ENCODE measurements at regions of chr18 and their contacts with region 1.

Region 1: GRCh38 chr18:839224-840022 is 27.4 kb upstream of the YES1 start:
- DNase-seq: peak; percentile 52 to 65
- ATAC-seq: peak; percentile 77 to 85
- H3K4me3 ChIP-seq: no peak overlapping the region
- H3K27ac ChIP-seq: no peak overlapping the region
- H3K4me1 ChIP-seq: peaks cover 0 to 5% of the 10 kb centered on the region in 2 donors
- H3K27me3 ChIP-seq: no peaks in the 10 kb centered on the region
- CTCF ChIP-seq: peak; percentile 78 to 99 (median 89)
- POLR2A ChIP-seq: no peak

Region 2: DNA sequence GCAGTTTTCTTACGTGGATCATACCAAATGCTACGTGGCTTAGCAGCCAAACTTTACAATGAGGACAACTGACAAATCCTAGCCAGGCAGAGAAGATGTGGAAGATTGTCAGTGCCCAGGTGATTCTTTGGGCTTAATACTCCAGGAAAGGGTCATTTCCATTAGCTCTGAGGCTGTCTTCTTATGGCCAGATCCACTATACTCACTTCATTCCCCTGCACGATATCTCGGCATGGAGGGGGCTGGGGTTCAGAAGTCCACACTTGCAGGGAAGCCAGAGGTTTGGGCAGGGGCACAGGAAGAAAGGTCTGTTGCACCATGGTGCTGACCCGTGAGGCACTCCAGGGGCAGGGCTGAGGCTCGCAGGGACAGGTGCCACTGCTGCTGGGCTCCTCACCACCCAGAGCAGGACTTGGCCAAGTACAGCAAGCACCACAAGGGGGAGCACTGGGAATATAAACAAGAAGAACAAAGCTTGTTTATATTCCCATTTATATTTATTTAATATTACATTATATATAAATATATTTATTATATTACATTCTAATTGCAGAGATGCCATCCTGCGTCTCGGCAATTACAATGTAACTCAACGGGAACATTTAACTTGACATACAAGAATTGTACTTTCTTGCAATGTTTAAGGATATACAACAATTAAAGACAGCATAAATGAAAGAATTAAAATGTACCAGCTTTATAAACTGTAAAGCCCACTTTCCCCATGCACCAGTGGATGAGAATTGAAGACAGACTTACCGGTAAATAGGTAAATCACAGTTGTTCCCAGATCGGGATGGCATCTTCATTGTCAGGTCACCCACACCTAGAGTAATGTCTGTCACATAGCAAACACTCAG is 215.4 kb before region 1 on chr18:
- in situ Hi-C with region 1: loop called in 3 of 4 experiments (anchors 5 to 25 kb)
- intact Hi-C with region 1: loop called (anchors 2 kb)
- DNase-seq: peak; percentile 7 to 18
- ATAC-seq: no peak
- H3K4me3 ChIP-seq: no peak overlapping the region
- H3K27ac ChIP-seq: no peak overlapping the region
- H3K4me1 ChIP-seq: no peaks in the 10 kb centered on the region
- H3K27me3 ChIP-seq: no peaks in the 10 kb centered on the region
- CTCF ChIP-seq: peak in 4 of 5 experiments; percentile 24 to 58 (median 40)
- POLR2A ChIP-seq: no peak

Region 3: GRCh38 chr18:644395-645004 is 194.9 kb before region 1 on chr18:
- in situ Hi-C with region 1: loop called in 1 of 4 experiments (anchors 25 kb)
- intact Hi-C with region 1: no loop called
- DNase-seq: no peak
- ATAC-seq: no peak
- H3K4me3 ChIP-seq: no peak overlapping the region
- H3K27ac ChIP-seq: no peak overlapping the region
- H3K4me1 ChIP-seq: no peaks in the 10 kb centered on the region
- H3K27me3 ChIP-seq: peaks cover 0 to 8% (median 0%) of the 10 kb centered on the region in 3 donors
- CTCF ChIP-seq: no peak
- POLR2A ChIP-seq: no peak

Region 4: GRCh38 chr18:741931-742512 is 97.4 kb before region 1 on chr18:
- in situ Hi-C with region 1: loop called (anchors 5 to 10 kb)
- intact Hi-C with region 1: no loop called
- DNase-seq: no peak
- ATAC-seq: peak; percentile 70 to 80
- H3K4me3 ChIP-seq: no peak overlapping the region
- H3K27ac ChIP-seq: no peak overlapping the region
- H3K4me1 ChIP-seq: no peaks in the 10 kb centered on the region
- H3K27me3 ChIP-seq: no peaks in the 10 kb centered on the region
- CTCF ChIP-seq: peak; percentile 74 to 81 (median 79)
- POLR2A ChIP-seq: no peak

Region 5: DNA sequence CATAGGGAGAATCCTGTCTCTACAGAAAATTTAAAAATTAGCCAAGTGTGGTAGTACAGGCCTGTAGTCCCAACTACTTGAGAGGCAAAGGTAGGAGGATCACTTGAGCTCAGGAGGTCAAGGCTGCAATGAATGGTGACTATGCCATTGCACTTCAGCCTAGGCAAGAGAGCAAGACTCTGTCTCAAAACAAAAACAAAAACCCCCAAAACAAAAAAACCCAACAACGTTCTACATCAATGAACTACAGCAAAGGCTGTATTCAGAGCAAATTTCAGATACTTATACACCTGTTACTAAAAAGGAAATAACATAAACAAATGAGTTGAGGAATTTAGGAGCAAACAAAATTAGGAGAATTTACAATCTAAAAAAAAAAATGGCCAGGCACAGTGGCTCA is 50.0 kb before region 1 on chr18:
- in situ Hi-C with region 1: no loop called
- intact Hi-C with region 1: loop called (anchors 2 kb)
- DNase-seq: no peak
- ATAC-seq: no peak
- H3K4me3 ChIP-seq: no peak overlapping the region
- H3K27ac ChIP-seq: no peak overlapping the region
- H3K4me1 ChIP-seq: peaks cover 12 to 15% of the 10 kb centered on the region in 2 donors
- H3K27me3 ChIP-seq: no peaks in the 10 kb centered on the region
- CTCF ChIP-seq: no peak
- POLR2A ChIP-seq: no peak

Region 6: DNA sequence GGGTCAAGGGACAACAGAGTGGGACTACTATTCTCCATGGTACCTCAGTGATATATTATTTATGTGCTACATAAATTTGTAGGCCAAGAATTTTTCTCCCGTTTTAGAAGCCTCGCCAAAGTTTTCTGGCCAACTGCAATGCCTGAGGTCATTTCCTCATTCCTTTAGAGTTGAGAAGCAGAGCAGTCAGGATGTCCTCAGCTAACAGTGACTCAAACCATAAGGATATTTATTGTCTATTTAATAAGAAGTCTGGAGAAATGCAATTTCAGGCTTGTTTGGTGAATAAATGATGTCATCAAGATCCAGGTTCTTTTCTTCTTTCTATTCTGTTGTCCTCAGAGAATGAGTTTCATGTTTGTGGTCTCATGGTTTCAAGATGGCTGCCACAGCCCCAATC is 156.2 kb after region 1 on chr18:
- in situ Hi-C with region 1: no loop called
- intact Hi-C with region 1: no loop called
- DNase-seq: no peak
- ATAC-seq: no peak
- H3K4me3 ChIP-seq: no peak overlapping the region
- H3K27ac ChIP-seq: no peak overlapping the region
- H3K4me1 ChIP-seq: no peaks in the 10 kb centered on the region
- H3K27me3 ChIP-seq: no peaks in the 10 kb centered on the region
- CTCF ChIP-seq: no peak
- POLR2A ChIP-seq: no peak

Measured in gastrocnemius medialis (tissue), 4 donors.